ENCODE measurements at regions of chr19 and their contacts with region 1.

Region 1: GRCh38 chr19:30682999-30683536 is 310.9 kb downstream of the ZNF536 start:
- DNase-seq: peak; percentile 85
- H3K4me3 ChIP-seq: no peak overlapping the region
- H3K27ac ChIP-seq: no peak overlapping the region
- H3K4me1 ChIP-seq: peaks cover 0 to 12% (median 5%) of the 10 kb centered on the region in 4 donors
- H3K27me3 ChIP-seq: peaks cover 0 to 13% (median 0%) of the 10 kb centered on the region in 3 donors
- CTCF ChIP-seq: peak; percentile 59 to 86 (median 82)
- EP300 ChIP-seq: no peak
- POLR2A ChIP-seq: no peak

Region 2: DNA sequence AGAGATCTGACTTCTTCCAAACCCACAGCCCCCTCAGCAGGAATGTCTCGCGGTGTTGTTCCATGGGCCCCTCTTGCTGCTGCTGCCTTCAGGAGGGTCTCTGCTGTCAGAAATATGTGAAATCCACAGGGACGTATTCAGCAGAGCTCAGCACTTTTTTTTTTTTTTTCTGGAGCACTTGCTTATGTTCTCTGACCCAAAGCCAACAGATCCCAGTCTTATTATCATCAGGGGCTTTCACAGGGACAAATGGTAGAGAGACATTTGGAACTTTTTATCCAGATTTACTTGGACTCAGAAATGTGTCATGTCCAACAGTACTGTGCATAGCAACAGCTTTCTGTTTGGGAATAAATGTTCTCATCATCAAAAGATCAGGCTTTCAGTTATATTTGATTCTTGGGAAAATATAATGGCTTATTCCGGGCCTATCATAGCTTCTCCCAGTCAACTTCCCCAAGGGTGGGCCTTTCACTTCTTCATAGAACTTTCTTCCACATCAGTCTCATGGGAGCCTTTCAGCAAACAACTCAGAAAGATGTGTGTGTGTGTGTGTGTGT is 21.8 kb after region 1 on chr19:
- intact Hi-C with region 1: no loop called
- DNase-seq: peak; percentile 8
- H3K4me3 ChIP-seq: no peak overlapping the region
- H3K27ac ChIP-seq: no peak overlapping the region
- H3K4me1 ChIP-seq: no peaks in the 10 kb centered on the region
- H3K27me3 ChIP-seq: no peaks in the 10 kb centered on the region
- CTCF ChIP-seq: no peak
- EP300 ChIP-seq: no peak
- POLR2A ChIP-seq: no peak

Region 3: DNA sequence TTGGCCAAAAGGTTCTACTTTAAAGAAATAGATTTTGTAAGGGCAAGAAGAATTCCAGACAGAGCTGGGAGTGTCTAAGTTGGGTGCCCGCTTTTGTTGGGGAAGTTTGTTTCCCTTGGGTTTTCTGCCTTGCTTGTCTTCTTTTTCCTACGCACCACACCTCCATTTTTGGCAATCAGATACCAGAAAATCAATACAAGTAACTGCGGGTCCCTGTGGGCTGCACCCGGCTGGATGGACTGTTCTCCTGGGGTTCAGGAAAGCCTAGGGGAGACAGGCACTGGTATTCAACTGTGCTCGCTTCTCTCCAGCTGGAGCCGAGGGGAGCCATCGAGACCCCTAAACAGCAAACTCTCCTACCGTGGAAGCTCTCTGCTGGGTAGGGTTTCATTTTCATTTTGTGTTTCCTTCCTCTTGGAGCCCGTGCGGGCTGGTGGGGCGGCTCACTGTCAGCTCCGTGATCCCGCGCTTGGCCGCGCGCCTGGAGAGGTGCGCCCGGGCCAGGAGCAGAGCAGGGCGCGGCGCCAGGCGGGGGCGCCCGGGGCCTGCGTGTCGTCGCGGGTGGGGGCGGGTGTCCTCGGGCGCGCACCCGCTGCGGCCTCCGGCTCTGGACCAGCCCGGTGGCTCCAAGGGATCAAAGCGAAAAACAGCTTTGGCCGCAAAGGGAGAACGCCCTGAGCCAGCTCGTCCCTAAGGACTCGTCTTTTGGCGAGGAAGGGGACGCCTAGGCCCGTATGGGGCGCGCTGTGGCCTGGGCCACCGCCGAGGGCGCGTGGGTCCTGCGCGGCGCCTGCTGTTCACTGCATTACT is 36.3 kb after region 1 on chr19:
- intact Hi-C with region 1: loop called (anchors 5 kb)
- DNase-seq: peak; percentile 85
- H3K4me3 ChIP-seq: peak overlapping the region; percentile 47 to 74 (median 62)
- H3K27ac ChIP-seq: peak overlapping the region; percentile 82 to 93 (median 87)
- H3K4me1 ChIP-seq: peaks cover 0 to 19% (median 16%) of the 10 kb centered on the region in 4 donors
- H3K27me3 ChIP-seq: no peaks in the 10 kb centered on the region
- CTCF ChIP-seq: no peak
- EP300 ChIP-seq: no peak
- POLR2A ChIP-seq: no peak

Region 4: DNA sequence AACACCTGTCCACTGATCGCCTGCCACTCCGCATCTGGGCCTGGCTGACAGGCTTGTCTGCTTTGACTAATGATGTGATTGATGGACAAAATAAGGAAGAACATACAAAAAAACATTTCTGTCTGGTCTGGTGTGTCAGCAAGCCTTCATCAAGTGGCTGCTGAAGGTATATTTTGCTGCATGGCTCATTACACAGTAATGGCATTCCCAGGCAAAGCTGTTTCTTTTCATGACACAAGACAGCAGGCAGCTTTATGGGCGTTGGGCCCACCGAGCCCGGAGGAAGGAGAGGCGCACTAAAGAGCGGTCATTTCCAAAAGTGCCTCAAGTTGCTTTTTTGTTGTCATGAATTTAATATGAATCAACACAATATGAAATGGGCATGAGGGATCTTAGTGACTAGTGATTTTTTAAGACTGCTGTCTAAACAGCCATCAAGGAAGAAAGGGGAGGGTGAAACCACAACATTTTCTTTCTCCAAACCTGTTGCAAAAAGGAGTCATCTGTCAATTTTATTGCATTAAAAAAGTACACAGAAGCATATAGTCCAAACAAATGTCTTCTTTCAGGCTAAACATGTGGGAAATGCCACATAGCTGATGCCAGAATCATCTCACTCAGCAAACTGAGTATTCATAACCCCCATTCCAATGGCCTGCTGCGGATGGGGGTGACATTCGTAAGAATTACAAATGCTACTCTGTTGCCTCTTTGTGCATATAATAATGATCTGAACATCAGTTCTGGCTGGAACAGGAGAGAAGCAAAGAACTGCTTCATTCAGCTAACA is 165.8 kb after region 1 on chr19:
- intact Hi-C with region 1: no loop called
- DNase-seq: no peak
- H3K4me3 ChIP-seq: no peak overlapping the region
- H3K27ac ChIP-seq: peak overlapping the region in 2 of 4 donors; percentile 20 to 52
- H3K4me1 ChIP-seq: peaks cover 0 to 26% (median 23%) of the 10 kb centered on the region in 4 donors
- H3K27me3 ChIP-seq: no peaks in the 10 kb centered on the region
- CTCF ChIP-seq: no peak
- EP300 ChIP-seq: no peak
- POLR2A ChIP-seq: no peak

Region 5: GRCh38 chr19:31338069-31338776 is 655.2 kb after region 1 on chr19:
- intact Hi-C with region 1: loop called (anchors 10 kb)
- DNase-seq: peak; percentile 92
- H3K4me3 ChIP-seq: peak overlapping the region in 3 of 4 donors; percentile 4 to 25 (median 21)
- H3K27ac ChIP-seq: peak overlapping the region; percentile 72 to 99 (median 82)
- H3K4me1 ChIP-seq: peaks cover 0 to 94% (median 77%) of the 10 kb centered on the region in 4 donors
- H3K27me3 ChIP-seq: no peaks in the 10 kb centered on the region
- CTCF ChIP-seq: peak in 3 of 4 experiments; percentile 66 to 72 (median 69)
- EP300 ChIP-seq: no peak
- POLR2A ChIP-seq: no peak

Measured in sigmoid colon (tissue), 7 donors.